ENCODE measurements at regions of chr10 and their contacts with region 1.

Region 1: DNA sequence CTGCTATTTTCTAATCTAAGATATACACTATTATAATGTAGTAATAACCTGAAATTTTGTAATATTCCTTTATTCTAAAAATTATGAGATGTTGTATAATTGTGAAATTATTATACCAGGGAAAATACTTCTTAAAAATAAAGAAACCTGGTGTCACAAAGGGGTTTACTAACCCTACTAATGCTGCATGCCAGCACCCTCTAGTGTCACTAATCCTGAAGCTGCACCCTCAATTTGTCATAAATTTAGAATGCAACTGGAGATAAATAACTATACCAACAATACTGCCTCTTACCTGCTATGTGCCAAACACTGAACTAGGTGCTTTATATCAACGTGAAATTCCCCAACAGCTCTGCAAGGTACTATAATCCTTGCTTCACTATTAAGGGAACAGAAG is 30.8 kb downstream of the TM9SF3 start:
- DNase-seq: no peak
- H3K4me3 ChIP-seq: no peak overlapping the region
- H3K27ac ChIP-seq: no peak overlapping the region
- H3K4me1 ChIP-seq: no peaks in the 10 kb centered on the region
- H3K27me3 ChIP-seq: no peaks in the 10 kb centered on the region
- CTCF ChIP-seq: peak in 2 of 3 experiments; percentile 44 to 45; a peak in 3 of 4 replicates
- EP300 ChIP-seq: no peak
- POLR2A ChIP-seq: no peak
- RAD21 ChIP-seq: peak; percentile 55 to 65

Region 2: GRCh38 chr10:96225119-96225518 is 330.9 kb before region 1 on chr10:
- CTCF ChIA-PET with region 1: no interaction called
- POLR2A ChIA-PET with region 1: no interaction called
- DNase-seq: no peak
- H3K4me3 ChIP-seq: no peak overlapping the region
- H3K27ac ChIP-seq: no peak overlapping the region
- H3K4me1 ChIP-seq: peaks cover 10 to 24% (median 12%) of the 10 kb centered on the region in 4 experiments; a peak in 6 of 7 replicates
- H3K27me3 ChIP-seq: no peaks in the 10 kb centered on the region
- CTCF ChIP-seq: no peak
- EP300 ChIP-seq: no peak
- POLR2A ChIP-seq: no peak
- RAD21 ChIP-seq: no peak

Region 3: DNA sequence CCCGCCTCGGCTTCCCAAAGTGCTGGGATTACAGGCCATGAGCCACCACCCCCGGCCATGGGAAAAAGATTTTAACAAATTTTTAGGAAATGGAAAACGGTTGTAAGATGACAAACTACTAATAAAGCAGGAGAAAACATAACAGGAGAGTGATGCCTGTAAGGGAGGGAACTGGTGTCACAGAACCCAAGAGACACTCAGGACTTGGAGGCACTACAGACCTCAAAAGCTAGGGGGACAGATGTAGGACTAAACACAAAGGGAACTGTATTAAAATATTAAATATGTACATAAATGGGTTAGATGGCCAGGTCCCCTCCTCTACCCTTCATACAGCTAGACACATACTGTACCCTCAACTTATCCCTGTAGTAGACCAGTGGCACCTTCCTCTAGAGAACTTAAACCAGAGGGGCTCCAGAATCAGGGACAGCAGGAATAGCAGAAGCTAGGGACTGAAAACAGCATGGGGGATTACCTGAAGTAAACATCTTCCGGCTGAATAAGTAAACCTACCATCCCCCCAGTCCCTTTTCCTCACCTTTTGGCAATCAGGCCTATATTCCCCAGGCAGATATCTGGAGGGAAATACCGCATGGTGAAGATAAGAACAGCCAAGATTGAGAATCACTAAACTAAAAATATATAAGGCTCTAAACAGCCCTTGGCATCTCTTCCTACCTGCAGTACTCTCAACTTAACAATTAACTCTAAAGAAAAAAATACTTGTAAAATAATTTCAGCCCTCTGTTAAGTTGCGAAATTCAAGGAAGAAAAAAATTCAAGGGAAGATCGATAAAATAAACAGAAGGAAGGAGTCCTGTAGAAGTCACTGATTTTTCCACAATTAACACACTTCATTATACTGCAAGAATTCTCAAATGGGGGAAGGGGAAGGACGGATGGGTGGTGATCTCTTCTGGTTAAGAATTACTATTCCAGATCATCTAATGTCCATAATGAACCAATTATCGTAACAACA is 15.3 kb after region 1 on chr10:
- CTCF ChIA-PET with region 1: interaction called, 18 read pairs
- POLR2A ChIA-PET with region 1: no interaction called
- DNase-seq: no peak
- H3K4me3 ChIP-seq: peak overlapping the region in 1 of 4 experiments; percentile 27; a peak in 1 of 8 replicates
- H3K27ac ChIP-seq: no peak overlapping the region
- H3K4me1 ChIP-seq: peaks cover 0 to 10% (median 5%) of the 10 kb centered on the region in 4 experiments; a peak in 4 of 7 replicates
- H3K27me3 ChIP-seq: no peaks in the 10 kb centered on the region
- CTCF ChIP-seq: no peak
- EP300 ChIP-seq: no peak
- POLR2A ChIP-seq: no peak
- RAD21 ChIP-seq: no peak

Measured in H1 (cell line).